Lower leg skin (tissue), 4 donors: ENCODE measurements at regions of chr4 and their contacts with region 1.

Region 1: GRCh38 chr4:13548984-13549546 is 4.8 kb upstream of the NKX3-2 start:
- DNase-seq: peak; percentile 70 to 97
- H3K4me3 ChIP-seq: no peak overlapping the region
- CTCF ChIP-seq: peak in 1 of 3 donors; percentile 62
- POLR2A ChIP-seq: no peak

Region 2: GRCh38 chr4:12734586-12734985 is 814.5 kb before region 1 on chr4:
- intact Hi-C with region 1: loop called (anchors 10 kb)
- DNase-seq: no peak
- H3K4me3 ChIP-seq: no peak overlapping the region
- CTCF ChIP-seq: no peak
- POLR2A ChIP-seq: no peak

Region 3: DNA sequence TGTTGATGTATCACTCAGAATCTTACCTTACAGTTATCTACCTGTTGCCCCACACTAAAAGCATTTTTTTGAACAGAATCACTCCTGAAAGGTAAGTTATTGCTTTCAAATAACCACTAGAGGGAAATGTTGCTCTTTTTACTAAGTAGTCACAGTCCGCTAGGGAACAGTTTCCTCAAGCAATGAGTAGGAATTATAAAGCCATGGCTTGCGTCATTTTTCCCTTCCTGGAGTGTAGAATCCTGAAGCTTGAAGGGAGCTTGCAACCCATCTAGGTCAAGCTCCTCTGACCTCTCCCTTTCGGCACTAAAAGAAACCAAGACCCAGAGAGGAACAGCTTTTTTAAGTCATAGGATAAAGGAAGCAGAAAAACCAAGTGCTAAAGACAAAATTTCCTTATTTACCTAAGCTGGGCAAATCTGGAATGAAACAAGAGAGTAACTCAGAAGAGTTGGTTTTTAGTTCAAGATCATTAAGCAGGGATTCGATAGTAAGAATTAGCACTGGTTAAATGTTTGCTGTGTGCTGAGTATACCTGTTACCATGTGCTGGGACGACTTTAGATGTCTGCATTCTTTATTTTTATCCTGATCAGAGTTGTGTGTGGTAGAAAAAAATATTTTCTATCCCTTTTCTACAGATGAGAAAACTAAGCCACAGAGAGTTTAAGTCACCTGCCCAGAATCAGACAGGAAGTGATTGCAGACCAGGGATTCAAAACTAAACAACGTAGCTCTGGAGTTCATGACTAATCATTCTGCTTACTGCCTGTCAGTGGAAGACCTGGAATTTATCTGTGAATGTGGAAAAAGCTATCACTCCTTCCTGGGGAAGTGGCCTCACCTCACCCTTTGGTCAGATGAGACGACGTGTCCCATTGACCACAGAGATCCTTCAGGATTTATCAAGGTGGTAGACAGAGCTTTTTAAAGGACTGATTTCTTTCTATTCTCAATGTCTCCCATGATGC is 696.4 kb before region 1 on chr4:
- intact Hi-C with region 1: loop called (anchors 5 kb)
- DNase-seq: no peak
- H3K4me3 ChIP-seq: no peak overlapping the region
- CTCF ChIP-seq: no peak
- POLR2A ChIP-seq: no peak